CD14-positive monocyte (primary cell): ENCODE measurements at regions of chr20 and their contacts with region 1.

Region 1: GRCh38 chr20:50528804-50529351 is 18.7 kb downstream of the PTPN1 start:
- DNase-seq: no peak
- H3K4me3 ChIP-seq: no peak overlapping the region
- H3K4me3 Mint-ChIP-seq: no peak overlapping the region
- H3K27ac ChIP-seq: no peak overlapping the region
- H3K27ac Mint-ChIP-seq: peak overlapping the region in 3 of 7 donors; percentile 15 to 45 (median 31)
- H3K4me1 ChIP-seq: peaks cover 18 to 35% of the 10 kb centered on the region in 2 donors
- H3K4me1 Mint-ChIP-seq: peaks cover 32% of the 10 kb centered on the region
- H3K27me3 ChIP-seq: no peaks in the 10 kb centered on the region
- H3K27me3 Mint-ChIP-seq: no peaks in the 10 kb centered on the region
- CTCF ChIP-seq: no peak

Region 2: DNA sequence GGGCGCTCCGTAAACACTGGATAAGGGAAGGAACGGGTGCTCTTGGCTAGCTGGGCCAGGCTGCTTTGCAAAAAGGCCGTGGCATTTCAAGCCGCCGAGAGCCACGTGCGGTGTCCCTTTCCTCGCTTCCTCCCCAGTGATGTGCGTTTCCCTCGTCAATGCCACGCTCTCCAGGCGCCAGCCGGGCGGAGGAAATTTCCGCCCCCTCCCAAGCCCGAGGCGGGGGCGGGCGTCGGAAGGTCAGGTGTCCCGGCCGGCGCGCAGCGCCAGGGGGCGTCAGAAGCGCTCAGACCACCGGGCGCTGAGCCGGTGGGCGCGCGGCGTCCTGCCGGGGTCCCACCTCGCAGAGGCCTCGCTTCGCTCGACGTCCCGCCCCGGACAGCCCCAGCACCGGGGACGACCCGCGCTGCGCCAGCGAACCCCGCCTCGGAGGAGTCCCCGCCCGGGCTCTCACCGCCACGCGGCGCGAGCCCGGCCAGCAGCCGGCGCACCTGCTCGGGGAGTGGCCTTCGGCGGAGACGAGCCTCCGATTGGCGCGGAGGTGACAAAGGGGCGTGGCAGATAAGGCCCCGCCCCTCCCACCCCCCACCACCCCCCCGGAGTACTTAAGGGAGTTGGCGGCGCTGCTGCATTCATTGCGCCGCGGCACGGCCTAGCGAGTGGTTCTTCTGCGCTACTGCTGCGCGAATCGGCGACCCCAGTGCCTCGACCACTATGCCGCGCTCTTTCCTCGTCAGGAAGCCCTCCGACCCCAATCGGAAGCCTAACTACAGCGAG is 546.3 kb before region 1 on chr20 and contains the start of gene SNAI1:
- intact Hi-C with region 1: no loop called
- DNase-seq: peak; percentile 72 to 87 (median 77)
- H3K4me3 ChIP-seq: peak within 1 kb of the TSS; percentile 48 to 86 (median 53)
- H3K4me3 Mint-ChIP-seq: peak within 1 kb of the TSS; percentile 85
- H3K27ac ChIP-seq: peak within 1 kb of the TSS; percentile 28 to 81
- H3K27ac Mint-ChIP-seq: peak within 1 kb of the TSS; percentile 46 to 90 (median 85)
- H3K4me1 ChIP-seq: peaks cover 23 to 60% of the 10 kb centered on the region in 2 donors
- H3K4me1 Mint-ChIP-seq: peaks cover 44% of the 10 kb centered on the region
- H3K27me3 ChIP-seq: peaks cover 0 to 10% of the 10 kb centered on the region in 2 donors
- H3K27me3 Mint-ChIP-seq: peaks cover 19 to 27% (median 22%) of the 10 kb centered on the region in 3 donors
- CTCF ChIP-seq: peak; percentile 56
- polyA plus RNA-seq, gene SNAI1: 2.4 to 181 (median 2.6) TPM

Region 3: GRCh38 chr20:50425085-50425484 is 103.8 kb before region 1 on chr20:
- intact Hi-C with region 1: no loop called
- DNase-seq: peak; percentile 53 to 82 (median 68)
- H3K4me3 ChIP-seq: no peak overlapping the region
- H3K4me3 Mint-ChIP-seq: no peak overlapping the region
- H3K27ac ChIP-seq: no peak overlapping the region
- H3K27ac Mint-ChIP-seq: peak overlapping the region in 1 of 7 donors; percentile 53
- H3K4me1 ChIP-seq: peaks cover 7 to 12% of the 10 kb centered on the region in 2 donors
- H3K4me1 Mint-ChIP-seq: peaks cover 28% of the 10 kb centered on the region
- H3K27me3 ChIP-seq: no peaks in the 10 kb centered on the region
- H3K27me3 Mint-ChIP-seq: peaks cover 0 to 3% (median 1%) of the 10 kb centered on the region in 3 donors
- CTCF ChIP-seq: no peak

Region 4: GRCh38 chr20:50569864-50570836 is 41.3 kb after region 1 on chr20:
- intact Hi-C with region 1: loop called in 1 of 2 experiments (anchors 5 kb)
- DNase-seq: peak; percentile 18 to 40 (median 18)
- H3K4me3 ChIP-seq: no peak overlapping the region
- H3K4me3 Mint-ChIP-seq: no peak overlapping the region
- H3K27ac ChIP-seq: peak overlapping the region in 1 of 2 donors; percentile 40
- H3K27ac Mint-ChIP-seq: peak overlapping the region in 5 of 7 donors; percentile 9 to 75 (median 38)
- H3K4me1 ChIP-seq: peaks cover 11 to 28% of the 10 kb centered on the region in 2 donors
- H3K4me1 Mint-ChIP-seq: peaks cover 45% of the 10 kb centered on the region
- H3K27me3 ChIP-seq: no peaks in the 10 kb centered on the region
- H3K27me3 Mint-ChIP-seq: peaks cover 0 to 2% (median 0%) of the 10 kb centered on the region in 3 donors
- CTCF ChIP-seq: peak; percentile 37